Activated CD4-positive, alpha-beta memory T cell treated with anti-CD3 and anti-CD28 coated beads, Interleukin-2, amount 10 ng/mL, durations not matched to agents 7 days and 5 days (primary cell): ENCODE measurements at regions of chr2 and their contacts with region 1.

Region 1: GRCh38 chr2:88880441-88880953 is 189.0 kb downstream of the RPIA start:
- DNase-seq: peak; percentile 38
- H3K4me3 Mint-ChIP-seq: no peak overlapping the region
- H3K27ac Mint-ChIP-seq: no peak overlapping the region
- H3K4me1 Mint-ChIP-seq: no peaks in the 10 kb centered on the region
- H3K27me3 Mint-ChIP-seq: peaks cover 32% of the 10 kb centered on the region

Region 2: GRCh38 chr2:88658326-88658725 is 222.2 kb before region 1 on chr2:
- CTCF ChIA-PET with region 1: no interaction called
- POLR2A ChIA-PET with region 1: no interaction called
- DNase-seq: no peak
- H3K4me3 Mint-ChIP-seq: no peak overlapping the region
- H3K27ac Mint-ChIP-seq: no peak overlapping the region
- H3K4me1 Mint-ChIP-seq: no peaks in the 10 kb centered on the region
- H3K27me3 Mint-ChIP-seq: no peaks in the 10 kb centered on the region

Region 3: GRCh38 chr2:88859461-88859860 is 21.0 kb before region 1 on chr2:
- CTCF ChIA-PET with region 1: interaction called, 29 read pairs
- POLR2A ChIA-PET with region 1: no interaction called
- DNase-seq: no peak
- H3K4me3 Mint-ChIP-seq: no peak overlapping the region
- H3K27ac Mint-ChIP-seq: no peak overlapping the region
- H3K4me1 Mint-ChIP-seq: no peaks in the 10 kb centered on the region
- H3K27me3 Mint-ChIP-seq: peaks cover 29% of the 10 kb centered on the region

Region 4: GRCh38 chr2:88896971-88897370 is 16.5 kb after region 1 on chr2:
- CTCF ChIA-PET with region 1: interaction called, 25 read pairs
- POLR2A ChIA-PET with region 1: interaction called, 3 read pairs
- DNase-seq: no peak
- H3K4me3 Mint-ChIP-seq: no peak overlapping the region
- H3K27ac Mint-ChIP-seq: no peak overlapping the region
- H3K4me1 Mint-ChIP-seq: no peaks in the 10 kb centered on the region
- H3K27me3 Mint-ChIP-seq: peaks cover 21% of the 10 kb centered on the region

Region 5: DNA sequence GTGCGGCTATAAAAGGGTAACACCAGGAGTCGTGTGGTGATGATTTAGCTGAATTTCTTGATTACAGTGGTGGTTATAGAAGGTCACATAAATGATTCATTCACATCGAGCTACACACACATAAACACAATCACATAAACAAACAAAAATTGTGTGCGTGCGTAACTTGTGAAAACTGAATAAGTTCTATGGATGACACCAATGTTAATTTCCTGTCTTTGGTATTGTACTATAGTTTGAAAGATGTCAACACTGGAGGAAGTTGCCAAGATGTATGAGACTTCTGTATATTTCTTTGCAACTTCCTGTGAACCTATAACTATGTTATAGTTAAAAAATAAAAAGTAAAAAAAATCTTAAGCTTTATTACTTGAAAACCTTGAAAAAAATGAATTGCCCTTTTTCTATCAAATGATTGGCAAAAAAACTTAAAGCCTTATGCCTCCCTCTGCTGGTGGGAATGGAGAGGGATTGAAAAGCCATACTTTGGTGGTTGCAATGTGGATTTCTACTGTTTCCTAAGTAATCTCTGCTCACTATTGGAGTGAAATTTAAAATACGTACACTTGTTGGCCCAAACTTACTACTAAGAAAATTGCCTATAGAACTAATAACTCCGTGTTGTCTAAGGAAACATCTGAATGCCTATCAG is 38.7 kb after region 1 on chr2:
- CTCF ChIA-PET with region 1: interaction called, 12 read pairs
- POLR2A ChIA-PET with region 1: interaction called, 3 read pairs
- DNase-seq: no peak
- H3K4me3 Mint-ChIP-seq: no peak overlapping the region
- H3K27ac Mint-ChIP-seq: no peak overlapping the region
- H3K4me1 Mint-ChIP-seq: no peaks in the 10 kb centered on the region
- H3K27me3 Mint-ChIP-seq: peaks cover 20% of the 10 kb centered on the region